Activated CD4-positive, alpha-beta memory T cell treated with anti-CD3 and anti-CD28 coated beads for 36 hours (primary cell): ENCODE measurements at regions of chr13 and their contacts with region 1.

Region 1: GRCh38 chr13:74287724-74288169 is 153.5 kb upstream of the KLF12 start:
- DNase-seq: peak; percentile 88
- H3K4me3 Mint-ChIP-seq: peak overlapping the region; percentile 59
- H3K27ac Mint-ChIP-seq: peak overlapping the region; percentile 30
- H3K4me1 Mint-ChIP-seq: peaks cover 66% of the 10 kb centered on the region
- H3K27me3 Mint-ChIP-seq: no peaks in the 10 kb centered on the region

Region 2: GRCh38 chr13:73722120-73722519 is 565.6 kb before region 1 on chr13:
- CTCF ChIA-PET with region 1: interaction called, 9 read pairs
- POLR2A ChIA-PET with region 1: no interaction called
- intact Hi-C with region 1: loop called (anchors 2 kb)
- DNase-seq: no peak
- H3K4me3 Mint-ChIP-seq: no peak overlapping the region
- H3K27ac Mint-ChIP-seq: no peak overlapping the region
- H3K4me1 Mint-ChIP-seq: peaks cover 37% of the 10 kb centered on the region
- H3K27me3 Mint-ChIP-seq: no peaks in the 10 kb centered on the region

Region 3: GRCh38 chr13:73835138-73835721 is 452.5 kb before region 1 on chr13:
- CTCF ChIA-PET with region 1: interaction called, 58 read pairs
- POLR2A ChIA-PET with region 1: no interaction called
- intact Hi-C with region 1: loop called (anchors 1 kb)
- DNase-seq: no peak
- H3K4me3 Mint-ChIP-seq: no peak overlapping the region
- H3K27ac Mint-ChIP-seq: no peak overlapping the region
- H3K4me1 Mint-ChIP-seq: peaks cover 37% of the 10 kb centered on the region
- H3K27me3 Mint-ChIP-seq: no peaks in the 10 kb centered on the region

Region 4: DNA sequence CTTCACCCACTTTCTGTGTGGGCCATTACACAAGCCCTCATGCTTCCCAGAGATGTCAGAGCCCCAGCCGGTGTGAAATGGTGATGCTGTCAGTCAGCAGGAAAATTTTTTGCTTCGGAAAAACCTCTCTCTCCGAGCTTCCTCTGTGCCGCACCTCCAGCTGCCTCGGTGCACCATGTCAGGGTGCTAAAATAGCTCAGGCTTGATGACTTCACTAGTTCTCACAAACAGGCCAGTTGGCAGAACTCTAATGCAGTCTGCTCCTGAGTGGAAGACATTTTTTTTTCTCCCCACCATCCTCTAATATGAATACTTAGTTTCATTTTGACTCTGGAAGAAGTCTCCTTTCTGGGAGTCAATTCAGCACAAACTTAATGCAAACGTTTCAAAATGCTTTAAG is 224.8 kb before region 1 on chr13:
- CTCF ChIA-PET with region 1: interaction called, 14 read pairs
- POLR2A ChIA-PET with region 1: no interaction called
- intact Hi-C with region 1: loop called (anchors 2 kb)
- DNase-seq: peak; percentile 75
- H3K4me3 Mint-ChIP-seq: peak overlapping the region; percentile 72
- H3K27ac Mint-ChIP-seq: peak overlapping the region; percentile 94
- H3K4me1 Mint-ChIP-seq: peaks cover 84% of the 10 kb centered on the region
- H3K27me3 Mint-ChIP-seq: no peaks in the 10 kb centered on the region

Region 5: DNA sequence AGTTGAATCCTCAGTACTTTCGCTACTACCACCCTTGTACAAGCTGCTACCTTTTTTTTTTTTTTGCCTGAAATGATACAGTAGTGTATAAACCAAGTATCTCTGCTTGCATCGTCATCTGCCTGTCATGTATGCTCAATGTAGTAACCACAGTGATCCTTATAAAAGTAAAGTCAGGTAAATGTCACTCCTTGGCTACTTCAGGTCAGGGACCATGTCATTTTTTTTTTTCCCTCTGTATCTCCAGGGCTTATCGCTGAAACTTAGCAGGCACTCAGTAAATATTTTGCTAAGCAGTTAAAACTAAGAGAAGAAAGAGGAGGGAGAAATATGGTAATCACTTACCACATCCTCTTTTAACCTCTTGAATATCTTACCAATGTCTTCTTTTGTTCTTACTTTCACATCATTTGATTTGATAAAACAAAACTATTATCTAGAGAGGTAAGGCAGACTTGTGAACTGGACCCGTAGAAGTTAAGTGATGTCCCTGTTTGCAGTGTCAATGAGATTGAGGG is 56.7 kb before region 1 on chr13:
- CTCF ChIA-PET with region 1: interaction called, 6 read pairs
- POLR2A ChIA-PET with region 1: interaction called, 5 read pairs
- intact Hi-C with region 1: loop called (anchors 2 kb)
- DNase-seq: no peak
- H3K4me3 Mint-ChIP-seq: peak overlapping the region; percentile 31
- H3K27ac Mint-ChIP-seq: peak overlapping the region; percentile 88
- H3K4me1 Mint-ChIP-seq: peaks cover 45% of the 10 kb centered on the region
- H3K27me3 Mint-ChIP-seq: no peaks in the 10 kb centered on the region

Region 6: DNA sequence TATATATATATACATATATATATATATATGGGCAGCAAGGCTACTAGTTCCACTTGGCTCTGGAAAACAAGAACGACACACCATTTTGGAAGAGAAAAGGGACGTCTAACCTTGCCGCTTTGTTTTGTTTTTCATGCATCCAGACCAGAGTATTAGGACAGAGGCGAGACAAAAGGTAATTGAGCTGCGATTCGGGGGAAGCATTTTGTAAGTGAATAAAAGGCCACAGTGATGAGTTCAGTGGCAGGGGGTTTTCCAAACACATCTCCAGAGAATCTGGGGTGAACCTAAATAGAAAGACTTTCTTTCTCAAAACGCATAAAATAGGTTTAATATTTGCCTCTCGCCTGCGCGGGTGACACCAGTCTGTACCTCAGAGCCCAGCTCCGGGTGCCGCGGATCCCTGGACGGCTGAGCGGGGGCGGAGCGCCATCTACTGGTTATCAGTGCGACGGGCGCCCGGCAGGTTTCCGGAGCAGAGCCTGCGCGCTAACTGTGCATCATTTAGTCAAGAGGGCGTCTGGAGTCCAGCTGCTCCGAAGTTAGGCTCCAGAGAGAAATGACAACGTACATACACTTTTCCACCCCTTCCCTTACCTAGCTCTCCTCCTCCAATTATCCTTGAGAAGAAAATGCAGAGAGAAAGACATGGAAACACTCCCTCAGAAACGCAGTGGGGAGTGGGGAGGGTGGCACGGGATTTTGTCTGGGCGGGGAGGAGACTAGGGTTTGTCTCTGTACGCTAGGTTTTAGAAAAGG is 931.9 kb after region 1 on chr13:
- CTCF ChIA-PET with region 1: interaction called, 16 read pairs
- POLR2A ChIA-PET with region 1: no interaction called
- intact Hi-C with region 1: loop called (anchors 5 kb)
- DNase-seq: peak; percentile 89
- H3K4me3 Mint-ChIP-seq: peak overlapping the region; percentile 53
- H3K27ac Mint-ChIP-seq: no peak overlapping the region
- H3K4me1 Mint-ChIP-seq: peaks cover 6% of the 10 kb centered on the region
- H3K27me3 Mint-ChIP-seq: peaks cover 21% of the 10 kb centered on the region